ENCODE measurements at regions of chr20 and their contacts with region 1.

Region 1: GRCh38 chr20:50762435-50763201 is 31.2 kb downstream of the PARD6B start:
- DNase-seq: peak; percentile 50 to 72
- H3K4me3 ChIP-seq: peak overlapping the region; percentile 22; the same call in 1 of the 2 replicates
- H3K27ac ChIP-seq: peak overlapping the region; percentile 96
- H3K4me1 ChIP-seq: peaks cover 64% of the 10 kb centered on the region
- H3K27me3 ChIP-seq: no peaks in the 10 kb centered on the region
- CTCF ChIP-seq: no peak

Region 2: GRCh38 chr20:50645253-50646118 is 117.1 kb before region 1 on chr20:
- CTCF ChIA-PET with region 1: no interaction called
- POLR2A ChIA-PET with region 1: no interaction called
- intact Hi-C with region 1: loop called (anchors 1 kb)
- DNase-seq: peak; percentile 97 to 100
- H3K4me3 ChIP-seq: peak overlapping the region; percentile 16; the same call in 1 of the 2 replicates
- H3K27ac ChIP-seq: peak overlapping the region; percentile 86
- H3K4me1 ChIP-seq: peaks cover 62% of the 10 kb centered on the region
- H3K27me3 ChIP-seq: no peaks in the 10 kb centered on the region
- CTCF ChIP-seq: no peak

Region 3: DNA sequence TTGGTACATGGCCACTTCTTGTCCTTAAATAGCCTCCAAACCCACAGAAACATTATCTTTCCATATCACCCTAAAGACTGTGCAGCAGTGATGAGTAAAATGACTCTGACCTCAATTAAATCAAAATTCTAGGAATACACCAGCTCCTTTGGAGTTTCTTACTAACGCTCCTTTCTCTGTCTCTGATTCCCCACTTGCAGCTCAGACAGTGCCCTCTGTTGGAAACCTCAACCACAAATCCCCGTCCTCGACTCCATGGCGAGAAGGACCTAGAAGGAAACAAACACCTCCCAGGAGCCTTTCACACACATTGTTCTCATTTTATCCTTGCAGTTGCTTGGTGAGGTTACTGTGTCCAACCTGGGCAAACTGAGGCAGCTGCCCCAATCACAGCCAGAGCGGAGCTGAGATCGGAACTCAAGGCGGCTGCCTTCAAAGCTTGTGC is 48.9 kb before region 1 on chr20:
- CTCF ChIA-PET with region 1: no interaction called
- POLR2A ChIA-PET with region 1: no interaction called
- intact Hi-C with region 1: loop called (anchors 10 kb)
- DNase-seq: no peak
- H3K4me3 ChIP-seq: no peak overlapping the region
- H3K27ac ChIP-seq: no peak overlapping the region
- H3K4me1 ChIP-seq: peaks cover 93% of the 10 kb centered on the region
- H3K27me3 ChIP-seq: no peaks in the 10 kb centered on the region
- CTCF ChIP-seq: no peak

Region 4: GRCh38 chr20:50750145-50750671 is 12.4 kb before region 1 on chr20:
- CTCF ChIA-PET with region 1: interaction called, 11 read pairs
- POLR2A ChIA-PET with region 1: interaction called, 4 read pairs
- intact Hi-C with region 1: no loop called
- DNase-seq: no peak
- H3K4me3 ChIP-seq: no peak overlapping the region
- H3K27ac ChIP-seq: no peak overlapping the region
- H3K4me1 ChIP-seq: peaks cover 36% of the 10 kb centered on the region
- H3K27me3 ChIP-seq: no peaks in the 10 kb centered on the region
- CTCF ChIP-seq: no peak

Region 5: DNA sequence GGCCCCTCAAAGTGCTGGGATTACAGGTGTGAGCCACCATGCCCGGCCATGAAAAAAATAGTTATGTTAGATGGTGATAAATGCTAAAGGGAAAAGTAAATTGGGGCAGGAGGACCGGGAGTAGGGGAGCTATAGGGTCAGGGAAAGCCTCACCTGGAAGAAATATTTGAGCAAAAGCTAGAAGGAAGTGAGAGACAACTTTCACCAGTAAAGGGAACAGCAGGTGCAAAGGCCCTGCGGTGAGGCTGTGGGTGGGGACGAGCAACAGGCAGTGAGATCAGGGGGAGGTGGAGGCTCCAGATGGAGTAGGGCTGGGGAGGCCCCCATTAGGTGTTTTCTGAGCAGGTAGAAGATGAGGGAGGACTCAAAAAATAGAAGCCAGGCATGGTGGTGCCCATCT is 48.2 kb after region 1 on chr20:
- CTCF ChIA-PET with region 1: no interaction called
- POLR2A ChIA-PET with region 1: no interaction called
- intact Hi-C with region 1: no loop called
- DNase-seq: no peak
- H3K4me3 ChIP-seq: no peak overlapping the region
- H3K27ac ChIP-seq: no peak overlapping the region
- H3K4me1 ChIP-seq: 0 out of 2 replicates have a peak, but pooled peaks cover 7% of the 10 kb centered on the region
- H3K27me3 ChIP-seq: no peaks in the 10 kb centered on the region
- CTCF ChIP-seq: no peak

Measured in PC-9 (cell line).